ENCODE measurements at regions of chr4 and their contacts with region 1.

Region 1: GRCh38 chr4:114509340-114509739 is 89.3 kb upstream of the UGT8 start:
- DNase-seq: no peak
- ATAC-seq: no peak
- H3K4me3 ChIP-seq: no peak overlapping the region
- H3K27ac ChIP-seq: no peak overlapping the region
- H3K4me1 ChIP-seq: no peaks in the 10 kb centered on the region
- H3K27me3 ChIP-seq: no peaks in the 10 kb centered on the region
- CTCF ChIP-seq: no peak
- EP300 ChIP-seq: no peak
- POLR2A ChIP-seq: no peak
- RAD21 ChIP-seq: no peak

Region 2: GRCh38 chr4:114659386-114660008 is 150.2 kb after region 1 on chr4:
- CTCF ChIA-PET with region 1: no interaction called
- POLR2A ChIA-PET with region 1: no interaction called
- in situ Hi-C with region 1: no loop called
- intact Hi-C with region 1: loop called (anchors 5 kb)
- DNase-seq: peak; percentile 23 to 59 (median 30)
- ATAC-seq: peak; percentile 92
- H3K4me3 ChIP-seq: no peak overlapping the region
- H3K27ac ChIP-seq: no peak overlapping the region
- H3K4me1 ChIP-seq: no peaks in the 10 kb centered on the region
- H3K27me3 ChIP-seq: no peaks in the 10 kb centered on the region
- CTCF ChIP-seq: peak; percentile 36 to 57 (median 56)
- EP300 ChIP-seq: no peak
- POLR2A ChIP-seq: no peak
- RAD21 ChIP-seq: peak; percentile 34 to 46; a peak in 3 of 4 replicates

Region 3: GRCh38 chr4:115325836-115326235 is 816.5 kb after region 1 on chr4:
- CTCF ChIA-PET with region 1: no interaction called
- POLR2A ChIA-PET with region 1: no interaction called
- in situ Hi-C with region 1: no loop called
- intact Hi-C with region 1: no loop called
- DNase-seq: no peak
- ATAC-seq: no peak
- H3K4me3 ChIP-seq: no peak overlapping the region
- H3K27ac ChIP-seq: no peak overlapping the region
- H3K4me1 ChIP-seq: no peaks in the 10 kb centered on the region
- H3K27me3 ChIP-seq: no peaks in the 10 kb centered on the region
- CTCF ChIP-seq: no peak
- EP300 ChIP-seq: no peak
- POLR2A ChIP-seq: no peak
- RAD21 ChIP-seq: no peak